Transverse colon (tissue), 4 donors: ENCODE measurements at regions of chr1 and their contacts with region 1.

Region 1: DNA sequence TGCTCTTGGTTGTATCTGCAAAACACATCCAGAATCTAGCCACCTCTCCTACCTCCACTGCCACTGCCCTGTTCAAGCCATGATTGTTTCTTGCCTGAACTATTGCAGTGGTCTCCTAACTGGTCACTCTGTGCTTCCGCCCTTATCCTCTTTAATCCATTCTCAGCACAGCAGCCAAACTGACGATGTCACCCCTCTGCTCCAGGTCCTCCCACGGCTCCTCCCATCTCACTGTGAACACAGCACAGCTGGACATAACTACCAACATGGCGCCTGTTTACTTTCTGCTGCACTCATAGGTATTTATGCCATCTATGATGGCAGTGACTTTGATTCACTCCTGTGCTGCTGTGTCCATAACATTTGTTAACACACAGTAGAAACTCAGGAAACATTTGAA is 406.7 kb downstream of the DISC1 start:
- DNase-seq: no peak
- H3K4me3 ChIP-seq: no peak overlapping the region
- H3K27ac ChIP-seq: no peak overlapping the region
- H3K4me1 ChIP-seq: no peaks in the 10 kb centered on the region
- H3K27me3 ChIP-seq: no peaks in the 10 kb centered on the region
- CTCF ChIP-seq: no peak
- EP300 ChIP-seq: no peak
- POLR2A ChIP-seq: no peak

Region 2: DNA sequence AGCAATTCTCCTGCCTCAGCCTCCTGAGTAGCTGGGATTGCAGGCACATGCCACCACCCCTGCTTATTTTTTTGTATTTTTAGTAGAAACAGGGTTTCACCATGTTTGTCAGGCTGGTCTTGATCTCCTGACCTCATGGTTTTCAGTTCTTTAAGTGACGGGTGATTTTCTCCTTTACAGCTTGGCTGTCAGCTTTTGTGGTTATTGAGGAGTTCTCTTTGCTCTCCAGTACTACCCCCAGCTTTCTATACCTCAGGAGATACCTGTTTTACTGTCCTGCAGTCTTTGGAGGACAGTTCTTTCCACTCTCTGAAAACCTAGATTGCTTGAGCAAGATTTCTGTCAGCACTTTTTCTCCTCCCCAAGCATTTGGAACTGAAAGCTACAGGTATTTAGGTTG is 565.3 kb before region 1 on chr1:
- in situ Hi-C with region 1: no loop called
- intact Hi-C with region 1: no loop called
- DNase-seq: no peak
- H3K4me3 ChIP-seq: no peak overlapping the region
- H3K27ac ChIP-seq: no peak overlapping the region
- H3K4me1 ChIP-seq: no peaks in the 10 kb centered on the region
- H3K27me3 ChIP-seq: peaks cover 6% of the 10 kb centered on the region
- CTCF ChIP-seq: no peak
- EP300 ChIP-seq: no peak
- POLR2A ChIP-seq: no peak

Region 3: GRCh38 chr1:231949277-231950091 is 83.8 kb before region 1 on chr1:
- in situ Hi-C with region 1: no loop called
- intact Hi-C with region 1: no loop called
- DNase-seq: no peak
- H3K4me3 ChIP-seq: no peak overlapping the region
- H3K27ac ChIP-seq: peak overlapping the region in 3 of 4 donors; percentile 25 to 35 (median 28)
- H3K4me1 ChIP-seq: no peaks in the 10 kb centered on the region
- H3K27me3 ChIP-seq: no peaks in the 10 kb centered on the region
- CTCF ChIP-seq: no peak
- EP300 ChIP-seq: no peak
- POLR2A ChIP-seq: no peak

Region 4: DNA sequence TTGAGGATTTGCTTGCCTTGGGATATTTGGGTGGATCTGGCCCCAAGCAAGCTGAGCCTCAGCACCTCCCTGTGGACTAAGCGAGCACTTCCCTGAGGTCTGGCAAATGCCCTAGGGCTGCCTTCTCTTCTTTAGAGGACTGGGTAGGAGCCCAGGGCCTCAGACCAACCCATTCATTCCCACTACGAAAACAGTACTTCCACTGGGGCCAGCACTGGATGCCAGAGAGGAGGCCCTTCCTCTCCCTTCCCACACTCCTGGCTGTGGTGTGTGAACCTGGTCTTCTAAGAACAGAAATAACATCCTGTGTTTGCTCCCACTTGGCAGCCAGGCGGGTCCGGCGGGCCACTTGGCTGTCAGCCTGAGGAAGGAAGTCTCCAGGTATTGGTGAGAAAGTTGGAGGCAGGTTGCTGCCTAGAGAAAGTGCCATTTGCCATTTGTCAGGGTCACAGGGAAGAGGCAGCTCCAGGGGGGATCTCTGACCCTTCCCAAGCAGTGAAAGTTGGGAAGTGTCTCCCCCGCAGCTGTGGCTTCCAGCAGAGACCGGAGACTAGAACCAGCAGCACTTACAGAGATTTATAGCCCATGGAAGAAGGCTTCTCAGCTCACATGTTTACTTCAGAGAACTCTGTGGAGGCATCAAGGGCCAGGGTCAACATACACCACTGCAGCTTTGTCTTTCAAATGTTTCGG is 273.1 kb after region 1 on chr1:
- in situ Hi-C with region 1: no loop called
- intact Hi-C with region 1: loop called (anchors 5 kb)
- DNase-seq: peak; percentile 60
- H3K4me3 ChIP-seq: no peak overlapping the region
- H3K27ac ChIP-seq: peak overlapping the region in 3 of 4 donors; percentile 7 to 38 (median 20)
- H3K4me1 ChIP-seq: peaks cover 0 to 22% (median 1%) of the 10 kb centered on the region in 4 donors
- H3K27me3 ChIP-seq: no peaks in the 10 kb centered on the region
- CTCF ChIP-seq: no peak
- EP300 ChIP-seq: no peak
- POLR2A ChIP-seq: no peak

Region 5: DNA sequence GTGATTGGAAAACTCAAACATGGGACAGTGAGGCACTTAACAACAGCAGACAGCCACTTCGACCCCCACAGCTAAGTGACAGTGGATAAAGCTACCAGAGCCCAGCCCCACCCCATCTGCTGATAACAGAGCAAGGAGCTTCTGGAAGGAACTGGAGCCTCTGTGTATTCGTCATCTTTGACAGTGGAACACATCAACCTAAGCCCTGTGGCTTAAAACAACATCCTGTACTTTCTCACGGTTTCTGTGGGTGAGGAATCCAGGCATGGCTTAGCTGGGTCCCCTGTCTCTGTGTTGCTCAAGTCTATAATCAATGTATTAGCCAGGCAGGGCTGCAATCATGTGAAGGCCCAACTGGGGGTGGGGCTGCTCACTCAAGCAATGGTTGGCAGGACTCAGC is 615.0 kb after region 1 on chr1:
- in situ Hi-C with region 1: no loop called
- intact Hi-C with region 1: no loop called
- DNase-seq: no peak
- H3K4me3 ChIP-seq: no peak overlapping the region
- H3K27ac ChIP-seq: no peak overlapping the region
- H3K4me1 ChIP-seq: no peaks in the 10 kb centered on the region
- H3K27me3 ChIP-seq: no peaks in the 10 kb centered on the region
- CTCF ChIP-seq: no peak
- EP300 ChIP-seq: no peak
- POLR2A ChIP-seq: no peak